IMR-90 (cell line): ENCODE measurements at regions of chr6 and their contacts with region 1.

Region 1: DNA sequence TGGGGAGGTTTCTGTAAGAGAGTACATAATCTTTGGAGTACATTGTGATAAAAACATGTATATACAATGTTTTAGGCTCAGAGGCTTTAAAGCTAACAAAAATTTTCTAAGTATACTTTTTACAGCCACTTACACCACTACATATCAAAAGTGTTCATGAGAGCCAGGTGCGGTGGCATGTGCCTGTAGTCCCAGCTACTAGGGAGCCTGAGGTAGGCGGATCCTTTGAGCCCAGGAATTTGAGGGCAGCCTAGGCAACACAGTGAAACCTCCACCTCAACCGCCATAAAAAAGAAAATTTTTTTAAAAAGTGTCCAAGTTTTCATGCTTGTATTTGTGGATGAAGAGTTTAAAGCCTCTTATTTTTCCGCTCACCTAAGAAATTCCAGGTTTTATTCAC is 22.5 kb downstream of the SNX3 start:
- DNase-seq: no peak
- ATAC-seq: no peak
- H3K4me3 ChIP-seq: no peak overlapping the region
- H3K27ac ChIP-seq: no peak overlapping the region
- H3K4me1 ChIP-seq: no peaks in the 10 kb centered on the region
- H3K27me3 ChIP-seq: no peaks in the 10 kb centered on the region
- CTCF ChIP-seq: no peak
- POLR2A ChIP-seq: no peak
- RAD21 ChIP-seq: no peak

Region 2: GRCh38 chr6:108222504-108222903 is 15.8 kb before region 1 on chr6:
- CTCF ChIA-PET with region 1: no interaction called
- POLR2A ChIA-PET with region 1: no interaction called
- dilution Hi-C with region 1: no loop called
- in situ Hi-C with region 1: no loop called
- intact Hi-C with region 1: loop called (anchors 2 kb)
- DNase-seq: peak; percentile 43
- ATAC-seq: peak; percentile 37
- H3K4me3 ChIP-seq: no peak overlapping the region
- H3K27ac ChIP-seq: no peak overlapping the region
- H3K4me1 ChIP-seq: no peaks in the 10 kb centered on the region
- H3K27me3 ChIP-seq: no peaks in the 10 kb centered on the region
- CTCF ChIP-seq: no peak
- POLR2A ChIP-seq: no peak
- RAD21 ChIP-seq: no peak

Region 3: GRCh38 chr6:108268845-108269244 is 30.5 kb after region 1 on chr6:
- CTCF ChIA-PET with region 1: no interaction called
- POLR2A ChIA-PET with region 1: no interaction called
- dilution Hi-C with region 1: no loop called
- in situ Hi-C with region 1: no loop called
- intact Hi-C with region 1: no loop called
- DNase-seq: no peak
- ATAC-seq: no peak
- H3K4me3 ChIP-seq: no peak overlapping the region
- H3K27ac ChIP-seq: no peak overlapping the region
- H3K4me1 ChIP-seq: no peaks in the 10 kb centered on the region
- H3K27me3 ChIP-seq: no peaks in the 10 kb centered on the region
- CTCF ChIP-seq: no peak
- POLR2A ChIP-seq: no peak
- RAD21 ChIP-seq: no peak